Caco-2 (cell line): ENCODE measurements at regions of chr10 and their contacts with region 1.

Region 1: GRCh38 chr10:72273410-72274212 is at the start of gene DDIT4:
- DNase-seq: peak; percentile 99 to 100
- H3K4me3 ChIP-seq: peak within 1 kb of the TSS; percentile 80
- H3K4me3 Mint-ChIP-seq: peak within 1 kb of the TSS; percentile 94
- H3K27ac Mint-ChIP-seq: peak within 1 kb of the TSS; percentile 99
- H3K4me1 ChIP-seq: peaks cover 22% of the 10 kb centered on the region
- H3K4me1 Mint-ChIP-seq: peaks cover 39% of the 10 kb centered on the region
- H3K27me3 ChIP-seq: no peaks in the 10 kb centered on the region
- H3K27me3 Mint-ChIP-seq: no peaks in the 10 kb centered on the region
- CTCF ChIP-seq: no peak
- total RNA-seq, gene DDIT4: 152 and 155 TPM in 2 replicates

Region 2: GRCh38 chr10:72097448-72098300 is 175.9 kb before region 1 on chr10:
- CTCF ChIA-PET with region 1: no interaction called
- POLR2A ChIA-PET with region 1: interaction called, 4 read pairs
- intact Hi-C with region 1: loop called (anchors 2 kb)
- DNase-seq: peak; percentile 62 to 82
- H3K4me3 ChIP-seq: no peak overlapping the region
- H3K4me3 Mint-ChIP-seq: peak overlapping the region; percentile 14
- H3K27ac Mint-ChIP-seq: peak overlapping the region; percentile 65
- H3K4me1 ChIP-seq: peaks cover 49% of the 10 kb centered on the region
- H3K4me1 Mint-ChIP-seq: peaks cover 62% of the 10 kb centered on the region
- H3K27me3 ChIP-seq: no peaks in the 10 kb centered on the region
- H3K27me3 Mint-ChIP-seq: no peaks in the 10 kb centered on the region
- CTCF ChIP-seq: no peak

Region 3: DNA sequence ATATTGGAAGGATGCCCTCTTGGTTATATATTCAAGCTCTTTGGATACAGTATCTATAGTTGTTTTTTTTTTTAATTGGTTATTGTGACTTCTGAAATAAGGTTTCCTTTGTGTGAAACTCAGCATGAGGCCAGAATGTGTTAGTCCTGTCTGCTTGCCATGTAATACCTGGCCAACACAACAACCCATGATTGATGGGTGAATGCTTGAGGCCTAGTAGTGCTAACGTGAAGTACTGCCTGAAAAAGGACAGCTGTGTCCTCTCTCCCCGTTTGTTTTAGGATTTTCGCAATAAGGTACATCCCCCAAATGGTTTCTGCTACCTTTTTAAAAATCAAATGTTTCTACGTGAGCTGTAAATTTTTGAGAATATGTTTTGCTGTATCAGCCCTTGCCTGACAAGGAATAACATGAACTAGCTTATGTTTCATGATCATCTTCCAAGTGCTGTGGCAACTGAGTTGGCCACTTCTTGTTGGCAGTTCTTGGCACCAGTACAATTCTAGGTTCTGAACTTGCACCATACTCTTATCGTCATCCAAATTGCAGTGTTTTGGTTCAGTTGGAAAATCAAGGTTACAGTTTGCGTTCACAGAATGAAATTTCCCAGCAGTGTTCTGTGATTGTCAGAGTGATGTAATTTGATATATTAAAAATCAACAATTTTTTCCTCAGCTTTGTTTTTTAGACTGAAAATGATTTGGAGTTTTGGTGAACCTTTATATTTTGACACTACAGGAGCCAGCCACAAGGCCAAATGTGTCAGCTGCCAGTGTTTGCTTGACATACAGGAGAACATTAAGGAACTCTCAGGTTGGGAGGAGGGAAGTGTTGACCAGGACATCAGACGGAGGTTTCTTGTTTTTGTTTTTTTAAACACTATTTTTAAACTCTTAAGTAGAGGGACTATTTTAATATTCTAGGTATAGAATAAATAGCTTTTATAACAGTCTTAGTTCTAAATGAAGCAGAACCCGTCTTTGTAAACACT is 44.1 kb before region 1 on chr10:
- CTCF ChIA-PET with region 1: no interaction called
- POLR2A ChIA-PET with region 1: interaction called, 13 read pairs
- intact Hi-C with region 1: loop called (anchors 2 kb)
- DNase-seq: no peak
- H3K4me3 ChIP-seq: no peak overlapping the region
- H3K4me3 Mint-ChIP-seq: no peak overlapping the region
- H3K27ac Mint-ChIP-seq: no peak overlapping the region
- H3K4me1 ChIP-seq: no peaks in the 10 kb centered on the region
- H3K4me1 Mint-ChIP-seq: peaks cover 18% of the 10 kb centered on the region
- H3K27me3 ChIP-seq: no peaks in the 10 kb centered on the region
- H3K27me3 Mint-ChIP-seq: no peaks in the 10 kb centered on the region
- CTCF ChIP-seq: no peak

Region 4: DNA sequence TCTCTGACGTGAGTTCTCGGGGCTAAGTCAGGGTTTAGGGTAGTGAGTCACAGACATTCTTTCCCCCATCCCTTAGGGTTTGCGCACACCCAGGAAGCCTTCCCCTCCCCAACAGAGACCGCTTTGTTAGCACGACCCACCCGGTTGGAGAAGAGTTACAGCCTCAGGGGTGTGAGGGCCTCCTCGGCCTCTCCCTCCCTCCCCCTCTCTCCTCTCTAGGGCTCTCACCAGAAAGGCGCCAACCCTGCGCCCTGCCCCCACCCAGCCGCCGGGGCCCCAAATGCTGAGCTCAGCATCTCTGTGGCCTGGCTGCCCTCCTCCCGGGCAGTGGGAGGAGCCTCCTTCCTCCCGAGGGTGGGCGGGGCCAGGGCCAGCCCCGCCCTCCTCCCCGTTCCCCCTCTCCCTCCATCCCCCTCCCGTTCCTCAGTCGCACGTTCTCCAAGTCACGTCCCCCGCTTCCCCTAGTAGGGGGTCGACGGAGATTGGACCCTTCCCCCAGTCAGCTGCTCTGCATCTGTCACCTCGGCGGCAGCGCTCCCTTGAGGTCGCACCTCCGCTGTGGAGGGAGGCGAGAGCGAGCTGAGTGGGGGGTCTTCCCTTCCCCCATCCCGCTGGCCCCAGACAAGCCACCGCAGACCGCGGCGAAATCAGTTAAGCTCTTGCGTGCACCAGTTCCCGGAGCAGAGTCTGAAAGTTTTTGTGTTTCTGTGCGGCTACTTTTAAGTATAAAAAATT is 12.9 kb before region 1 on chr10:
- CTCF ChIA-PET with region 1: interaction called, 40 read pairs
- POLR2A ChIA-PET with region 1: interaction called, 163 read pairs
- intact Hi-C with region 1: loop called (anchors 1 kb)
- DNase-seq: peak; percentile 94 to 98
- H3K4me3 ChIP-seq: peak overlapping the region; percentile 61
- H3K4me3 Mint-ChIP-seq: peak overlapping the region; percentile 91
- H3K27ac Mint-ChIP-seq: peak overlapping the region; percentile 96
- H3K4me1 ChIP-seq: peaks cover 22% of the 10 kb centered on the region
- H3K4me1 Mint-ChIP-seq: peaks cover 29% of the 10 kb centered on the region
- H3K27me3 ChIP-seq: no peaks in the 10 kb centered on the region
- H3K27me3 Mint-ChIP-seq: no peaks in the 10 kb centered on the region
- CTCF ChIP-seq: peak in 1 of 2 experiments; percentile 31

Region 5: DNA sequence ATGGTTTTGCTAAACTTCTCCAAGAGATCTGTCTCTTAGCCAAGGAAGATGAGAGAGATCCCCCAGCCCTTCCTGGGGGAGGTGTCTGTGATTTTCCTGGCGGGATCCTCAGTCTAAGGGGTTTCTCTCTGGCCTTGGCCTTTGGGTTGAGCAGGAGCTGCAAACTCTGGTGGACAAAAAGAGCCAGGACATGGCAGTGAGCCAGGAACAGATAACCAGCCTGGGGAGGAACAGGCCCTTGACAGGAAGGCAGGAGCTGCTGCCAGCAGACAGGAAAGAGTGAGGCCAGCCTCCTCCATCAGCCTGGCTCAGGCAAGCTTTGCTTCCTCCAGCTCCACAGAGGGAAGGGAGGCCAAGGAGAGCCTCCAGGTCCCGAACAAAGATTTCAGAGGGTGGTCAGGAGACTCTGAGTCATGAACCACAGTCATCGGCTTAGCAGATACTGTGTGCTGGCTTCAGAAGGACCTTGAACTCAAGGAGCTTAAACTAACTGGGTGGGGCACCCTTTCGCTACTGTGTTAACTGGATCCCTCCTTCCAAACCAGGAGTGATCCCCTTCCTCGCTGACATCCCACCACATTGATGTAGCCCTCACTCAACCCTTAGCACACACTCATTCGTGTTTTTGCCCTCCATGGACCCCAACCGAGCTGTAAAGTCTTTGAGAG is 34.8 kb after region 1 on chr10:
- CTCF ChIA-PET with region 1: interaction called, 3 read pairs
- POLR2A ChIA-PET with region 1: interaction called, 10 read pairs
- intact Hi-C with region 1: no loop called
- DNase-seq: peak; percentile 59 to 74
- H3K4me3 ChIP-seq: no peak overlapping the region
- H3K4me3 Mint-ChIP-seq: no peak overlapping the region
- H3K27ac Mint-ChIP-seq: peak overlapping the region; percentile 48
- H3K4me1 ChIP-seq: peaks cover 31% of the 10 kb centered on the region
- H3K4me1 Mint-ChIP-seq: peaks cover 26% of the 10 kb centered on the region
- H3K27me3 ChIP-seq: no peaks in the 10 kb centered on the region
- H3K27me3 Mint-ChIP-seq: no peaks in the 10 kb centered on the region
- CTCF ChIP-seq: no peak

Region 6: GRCh38 chr10:72328045-72328828 is 54.6 kb after region 1 on chr10:
- CTCF ChIA-PET with region 1: no interaction called
- POLR2A ChIA-PET with region 1: interaction called, 3 read pairs
- intact Hi-C with region 1: loop called (anchors 1 kb)
- DNase-seq: peak; percentile 81 to 91
- H3K4me3 ChIP-seq: no peak overlapping the region
- H3K4me3 Mint-ChIP-seq: no peak overlapping the region
- H3K27ac Mint-ChIP-seq: peak overlapping the region; percentile 63
- H3K4me1 ChIP-seq: 0 out of 2 replicates have a peak, but pooled peaks cover 8% of the 10 kb centered on the region
- H3K4me1 Mint-ChIP-seq: peaks cover 17% of the 10 kb centered on the region
- H3K27me3 ChIP-seq: no peaks in the 10 kb centered on the region
- H3K27me3 Mint-ChIP-seq: no peaks in the 10 kb centered on the region
- CTCF ChIP-seq: peak; percentile 78 to 95